ENCODE measurements at regions of chr12 and their contacts with region 1.

Region 1: GRCh38 chr12:120686690-120687577 is at the start of gene MLEC:
- DNase-seq: peak; percentile 97 to 98
- ATAC-seq: peak; percentile 82 to 85
- H3K4me3 ChIP-seq: peak within 1 kb of the TSS; percentile 61 to 90 (median 76)
- H3K27ac ChIP-seq: peak within 1 kb of the TSS; percentile 86 to 93 (median 90)
- H3K4me1 ChIP-seq: peaks cover 37 to 49% of the 10 kb centered on the region in 2 donors
- H3K27me3 ChIP-seq: no peaks in the 10 kb centered on the region
- CTCF ChIP-seq: peak in 2 of 5 experiments; percentile 4 to 32
- POLR2A ChIP-seq: peak; percentile 90 to 96
- total RNA-seq, gene MLEC: 46.5 to 89.4 (median 60.1) TPM

Region 2: DNA sequence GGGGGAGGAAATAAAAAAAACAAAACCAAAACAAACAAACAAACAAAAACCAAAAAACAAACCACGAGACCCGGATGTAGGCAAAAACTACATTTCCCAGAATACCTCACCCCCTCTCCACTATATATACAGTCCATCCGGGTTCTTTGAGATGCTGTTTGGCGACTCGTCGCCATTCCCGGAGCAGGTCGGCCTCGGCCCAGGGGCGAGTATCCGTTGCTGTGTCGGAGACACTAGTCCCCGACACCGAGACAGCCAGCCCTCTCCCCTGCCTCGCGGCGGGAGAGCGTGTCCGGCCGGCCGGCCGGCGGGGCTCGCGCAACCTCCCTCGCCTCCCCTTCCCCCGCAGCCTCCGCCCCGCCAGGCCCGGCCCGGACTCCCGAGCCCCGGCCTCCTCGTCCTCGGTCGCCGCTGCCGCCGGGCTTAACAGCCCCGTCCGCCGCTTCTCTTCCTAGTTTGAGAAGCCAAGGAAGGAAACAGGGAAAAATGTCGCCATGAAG is 152.7 kb before region 1 on chr12 and contains the start of gene RNF10:
- in situ Hi-C with region 1: no loop called
- intact Hi-C with region 1: no loop called
- DNase-seq: peak; percentile 77 to 82
- ATAC-seq: peak; percentile 76 to 83
- H3K4me3 ChIP-seq: peak within 1 kb of the TSS; percentile 68 to 89 (median 83)
- H3K27ac ChIP-seq: peak within 1 kb of the TSS; percentile 92 to 99 (median 97)
- H3K4me1 ChIP-seq: peaks cover 38 to 42% of the 10 kb centered on the region in 2 donors
- H3K27me3 ChIP-seq: no peaks in the 10 kb centered on the region
- CTCF ChIP-seq: no peak
- POLR2A ChIP-seq: peak; percentile 99 to 100
- total RNA-seq, gene RNF10: 152 to 282 (median 247) TPM

Region 3: GRCh38 chr12:120588948-120589930 is 97.7 kb before region 1 on chr12:
- in situ Hi-C with region 1: no loop called
- intact Hi-C with region 1: loop called (anchors 2 kb)
- DNase-seq: peak; percentile 81 to 84
- ATAC-seq: peak; percentile 88 to 95
- H3K4me3 ChIP-seq: peak overlapping the region in 3 of 4 donors; percentile 14 to 32 (median 23)
- H3K27ac ChIP-seq: peak overlapping the region; percentile 86 to 96 (median 88)
- H3K4me1 ChIP-seq: peaks cover 15 to 21% of the 10 kb centered on the region in 2 donors
- H3K27me3 ChIP-seq: no peaks in the 10 kb centered on the region
- CTCF ChIP-seq: no peak
- POLR2A ChIP-seq: peak in 1 of 2 donors; percentile 17

Region 4: GRCh38 chr12:120710031-120710804 is 23.3 kb after region 1 on chr12 and contains the start of gene UNC119B:
- in situ Hi-C with region 1: no loop called
- intact Hi-C with region 1: loop called (anchors 2 kb)
- DNase-seq: peak in 1 of 2 donors; percentile 42
- ATAC-seq: peak; percentile 79 to 81
- H3K4me3 ChIP-seq: peak within 1 kb of the TSS; percentile 63 to 87 (median 74)
- H3K27ac ChIP-seq: peak within 1 kb of the TSS; percentile 69 to 94 (median 85)
- H3K4me1 ChIP-seq: peaks cover 19 to 25% of the 10 kb centered on the region in 2 donors
- H3K27me3 ChIP-seq: no peaks in the 10 kb centered on the region
- CTCF ChIP-seq: peak in 1 of 5 experiments; percentile 24
- POLR2A ChIP-seq: peak; percentile 20 to 41
- total RNA-seq, gene UNC119B: 4.7 to 8.7 (median 7.8) TPM

Region 5: DNA sequence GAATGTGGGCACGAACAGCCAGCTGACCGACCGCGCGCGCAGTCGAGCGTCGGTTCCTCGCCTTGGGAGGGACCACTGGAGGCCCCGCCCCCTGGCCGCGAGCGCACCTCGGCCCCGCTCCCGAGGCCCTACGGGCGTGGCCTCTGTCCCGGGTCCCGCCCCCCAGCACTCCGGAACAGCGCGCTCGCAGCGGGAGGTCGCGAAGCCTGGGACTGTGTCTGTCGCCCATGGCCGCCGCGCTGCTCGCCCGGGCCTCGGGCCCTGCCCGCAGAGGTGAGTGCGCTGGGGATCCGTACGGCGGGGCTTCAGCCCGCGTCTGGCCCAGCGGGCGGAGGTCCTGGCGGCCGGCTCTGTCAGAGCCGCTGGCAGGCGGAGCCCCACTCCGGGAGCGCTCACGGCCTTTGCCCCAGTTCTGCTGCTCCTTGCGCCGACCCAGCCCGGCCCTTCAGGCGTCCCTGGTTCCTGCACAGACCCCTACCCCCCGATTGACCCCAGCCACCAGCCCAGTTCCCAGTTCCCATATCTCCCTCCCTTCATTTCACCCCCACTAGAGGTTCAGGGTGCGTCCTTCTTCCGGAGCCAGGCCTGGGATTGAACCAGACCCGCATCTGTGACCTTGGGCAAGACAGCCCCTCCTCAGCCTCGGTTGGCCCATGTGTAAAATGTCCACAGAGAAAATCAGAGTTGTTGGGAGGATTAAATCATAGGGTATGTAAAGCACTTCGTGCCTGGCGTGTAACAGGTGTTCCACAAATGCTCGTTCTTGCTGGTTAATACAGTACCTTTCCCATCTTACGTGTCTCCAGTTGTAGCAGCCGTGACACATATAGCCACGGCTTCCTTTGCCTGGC is 39.0 kb after region 1 on chr12 and contains the start of gene ACADS:
- in situ Hi-C with region 1: no loop called
- intact Hi-C with region 1: loop called (anchors 2 kb)
- DNase-seq: peak; percentile 85 to 88
- ATAC-seq: peak; percentile 83 to 89
- H3K4me3 ChIP-seq: peak within 1 kb of the TSS; percentile 78 to 92 (median 86)
- H3K27ac ChIP-seq: peak within 1 kb of the TSS; percentile 92 to 96 (median 94)
- H3K4me1 ChIP-seq: peaks cover 16 to 30% of the 10 kb centered on the region in 2 donors
- H3K27me3 ChIP-seq: no peaks in the 10 kb centered on the region
- CTCF ChIP-seq: peak in 1 of 5 experiments; percentile 25
- POLR2A ChIP-seq: peak; percentile 86 to 88
- total RNA-seq, gene ACADS: 166 to 224 (median 200) TPM

Region 6: GRCh38 chr12:120761519-120761934 is 74.6 kb after region 1 on chr12:
- in situ Hi-C with region 1: no loop called
- intact Hi-C with region 1: loop called (anchors 5 kb)
- DNase-seq: peak; percentile 77 to 83
- ATAC-seq: peak; percentile 85 to 88
- H3K4me3 ChIP-seq: peak overlapping the region; percentile 12 to 35 (median 22)
- H3K27ac ChIP-seq: peak overlapping the region; percentile 93 to 98 (median 94)
- H3K4me1 ChIP-seq: peaks cover 44 to 49% of the 10 kb centered on the region in 2 donors
- H3K27me3 ChIP-seq: no peaks in the 10 kb centered on the region
- CTCF ChIP-seq: no peak
- POLR2A ChIP-seq: peak in 1 of 2 donors; percentile 49

Region 7: DNA sequence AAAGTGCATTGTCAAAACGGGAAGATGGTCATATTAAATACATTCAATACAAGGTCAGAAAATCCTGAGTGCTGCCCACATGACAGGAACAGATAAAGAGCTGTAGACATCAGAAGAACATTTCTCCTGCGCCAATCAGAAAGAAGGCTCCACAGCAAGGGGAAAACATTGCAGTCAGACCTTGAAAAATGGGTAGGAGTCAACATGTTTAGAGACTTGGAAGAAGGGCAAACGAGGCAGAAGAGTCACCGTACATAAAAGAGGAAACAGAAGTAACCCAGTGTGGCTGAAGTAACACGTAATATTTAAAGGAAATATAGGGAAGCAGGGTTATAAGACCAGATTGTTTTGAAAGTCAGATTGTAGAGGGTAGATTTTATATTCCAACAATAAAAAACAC is 205.3 kb after region 1 on chr12:
- in situ Hi-C with region 1: no loop called
- intact Hi-C with region 1: loop called (anchors 1 kb)
- DNase-seq: no peak
- ATAC-seq: no peak
- H3K4me3 ChIP-seq: no peak overlapping the region
- H3K27ac ChIP-seq: peak overlapping the region in 1 of 4 donors; percentile 10
- H3K4me1 ChIP-seq: peaks cover 12 to 43% of the 10 kb centered on the region in 2 donors
- H3K27me3 ChIP-seq: no peaks in the 10 kb centered on the region
- CTCF ChIP-seq: no peak
- POLR2A ChIP-seq: no peak

Region 8: DNA sequence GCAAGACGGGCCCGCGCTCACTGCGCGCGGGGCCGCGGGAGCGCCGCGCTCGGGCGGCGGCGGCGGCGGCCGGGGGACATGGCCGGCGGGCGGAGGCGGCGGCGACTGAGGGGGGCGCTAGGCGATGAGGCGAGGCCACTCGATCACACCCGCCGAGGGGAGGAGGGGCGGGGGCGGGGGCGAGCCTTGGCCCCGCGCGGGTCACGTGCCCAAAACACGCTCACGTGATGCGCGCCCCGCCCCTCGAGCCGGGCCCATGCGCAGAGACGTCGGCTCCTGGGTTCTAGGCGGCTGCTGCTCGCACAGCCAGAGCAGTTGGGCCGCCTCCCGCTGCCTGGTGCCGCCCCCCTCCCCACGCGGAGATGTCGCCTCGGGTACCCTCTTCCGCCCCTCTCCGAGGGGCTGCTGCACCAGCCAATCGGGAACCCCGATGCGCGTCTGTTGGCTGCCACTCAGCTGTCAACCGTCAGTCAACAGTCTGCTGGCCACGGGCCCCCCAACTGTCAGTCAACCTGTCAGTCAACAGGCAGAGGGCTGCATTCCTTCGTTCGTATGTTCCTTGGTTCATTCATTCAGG is 217.4 kb after region 1 on chr12 and contains the start of gene SPPL3:
- in situ Hi-C with region 1: no loop called
- intact Hi-C with region 1: loop called (anchors 2 kb)
- DNase-seq: peak; percentile 82 to 89
- ATAC-seq: peak; percentile 84 to 85
- H3K4me3 ChIP-seq: peak within 1 kb of the TSS; percentile 89 to 99 (median 96)
- H3K27ac ChIP-seq: peak within 1 kb of the TSS; percentile 91 to 98 (median 94)
- H3K4me1 ChIP-seq: peaks cover 27 to 30% of the 10 kb centered on the region in 2 donors
- H3K27me3 ChIP-seq: no peaks in the 10 kb centered on the region
- CTCF ChIP-seq: peak in 1 of 5 experiments; percentile 33
- POLR2A ChIP-seq: peak; percentile 76 to 86
- total RNA-seq, gene SPPL3: 10.1 to 21.3 (median 10.6) TPM